H1 (cell line): ENCODE measurements at regions of chr6 and their contacts with region 1.

Region 1: GRCh38 chr6:35202066-35202546 is 11.7 kb upstream of the SCUBE3 start:
- DNase-seq: no peak
- H3K4me3 ChIP-seq: no peak overlapping the region
- H3K27ac ChIP-seq: no peak overlapping the region
- H3K4me1 ChIP-seq: peaks cover 0 to 7% (median 5%) of the 10 kb centered on the region in 4 experiments; a peak in 4 of 7 replicates
- H3K27me3 ChIP-seq: peaks cover 3 to 11% (median 6%) of the 10 kb centered on the region in 4 experiments; a peak in 5 of 7 replicates
- CTCF ChIP-seq: peak in 1 of 3 experiments; percentile 36; a peak in 1 of 4 replicates
- EP300 ChIP-seq: no peak
- POLR2A ChIP-seq: no peak
- RAD21 ChIP-seq: peak in 1 of 2 experiments; percentile 24; a peak in 1 of 4 replicates

Region 2: GRCh38 chr6:35007016-35007415 is 195.1 kb before region 1 on chr6:
- CTCF ChIA-PET with region 1: no interaction called
- POLR2A ChIA-PET with region 1: no interaction called
- DNase-seq: no peak
- H3K4me3 ChIP-seq: no peak overlapping the region
- H3K27ac ChIP-seq: no peak overlapping the region
- H3K4me1 ChIP-seq: no peaks in the 10 kb centered on the region
- H3K27me3 ChIP-seq: no peaks in the 10 kb centered on the region
- CTCF ChIP-seq: no peak
- EP300 ChIP-seq: no peak
- POLR2A ChIP-seq: no peak
- RAD21 ChIP-seq: no peak

Region 3: GRCh38 chr6:35165630-35166071 is 36.5 kb before region 1 on chr6:
- CTCF ChIA-PET with region 1: interaction called, 19 read pairs
- POLR2A ChIA-PET with region 1: no interaction called
- DNase-seq: no peak
- H3K4me3 ChIP-seq: no peak overlapping the region
- H3K27ac ChIP-seq: no peak overlapping the region
- H3K4me1 ChIP-seq: no peaks in the 10 kb centered on the region
- H3K27me3 ChIP-seq: peaks cover 0 to 2% (median under 1%) of the 10 kb centered on the region in 4 experiments; a peak in 4 of 7 replicates
- CTCF ChIP-seq: no peak
- EP300 ChIP-seq: no peak
- POLR2A ChIP-seq: no peak
- RAD21 ChIP-seq: no peak

Region 4: GRCh38 chr6:35181933-35182612 is 20.0 kb before region 1 on chr6:
- CTCF ChIA-PET with region 1: interaction called, 34 read pairs
- POLR2A ChIA-PET with region 1: no interaction called
- DNase-seq: peak in 1 of 2 experiments; percentile 64
- H3K4me3 ChIP-seq: peak overlapping the region in 1 of 4 experiments; percentile 46; a peak in 3 of 8 replicates
- H3K27ac ChIP-seq: no peak overlapping the region
- H3K4me1 ChIP-seq: peaks cover 0 to 5% (median 4%) of the 10 kb centered on the region in 4 experiments; a peak in 5 of 7 replicates
- H3K27me3 ChIP-seq: peaks cover 0 to 14% (median 4%) of the 10 kb centered on the region in 4 experiments; a peak in 4 of 7 replicates
- CTCF ChIP-seq: no peak
- EP300 ChIP-seq: no peak
- POLR2A ChIP-seq: no peak
- RAD21 ChIP-seq: no peak

Region 5: GRCh38 chr6:35213824-35214756 is 12.0 kb after region 1 on chr6 and contains the start of gene SCUBE3:
- CTCF ChIA-PET with region 1: interaction called, 219 read pairs
- POLR2A ChIA-PET with region 1: interaction called, 4 read pairs
- DNase-seq: peak in 1 of 2 experiments; percentile 81
- H3K4me3 ChIP-seq: peak within 1 kb of the TSS; percentile 45 to 74 (median 60)
- H3K27ac ChIP-seq: no peak within 1 kb of the TSS
- H3K4me1 ChIP-seq: peaks cover 7 to 37% (median 29%) of the 10 kb centered on the region in 4 experiments
- H3K27me3 ChIP-seq: peaks cover 25 to 77% (median 64%) of the 10 kb centered on the region in 4 experiments
- CTCF ChIP-seq: no peak
- EP300 ChIP-seq: no peak
- POLR2A ChIP-seq: no peak
- RAD21 ChIP-seq: no peak
- total RNA-seq, gene SCUBE3: 1.0 TPM in 2 replicates